Psoas muscle (tissue), 8 donors: ENCODE measurements at regions of chr16 and their contacts with region 1.

Region 1: DNA sequence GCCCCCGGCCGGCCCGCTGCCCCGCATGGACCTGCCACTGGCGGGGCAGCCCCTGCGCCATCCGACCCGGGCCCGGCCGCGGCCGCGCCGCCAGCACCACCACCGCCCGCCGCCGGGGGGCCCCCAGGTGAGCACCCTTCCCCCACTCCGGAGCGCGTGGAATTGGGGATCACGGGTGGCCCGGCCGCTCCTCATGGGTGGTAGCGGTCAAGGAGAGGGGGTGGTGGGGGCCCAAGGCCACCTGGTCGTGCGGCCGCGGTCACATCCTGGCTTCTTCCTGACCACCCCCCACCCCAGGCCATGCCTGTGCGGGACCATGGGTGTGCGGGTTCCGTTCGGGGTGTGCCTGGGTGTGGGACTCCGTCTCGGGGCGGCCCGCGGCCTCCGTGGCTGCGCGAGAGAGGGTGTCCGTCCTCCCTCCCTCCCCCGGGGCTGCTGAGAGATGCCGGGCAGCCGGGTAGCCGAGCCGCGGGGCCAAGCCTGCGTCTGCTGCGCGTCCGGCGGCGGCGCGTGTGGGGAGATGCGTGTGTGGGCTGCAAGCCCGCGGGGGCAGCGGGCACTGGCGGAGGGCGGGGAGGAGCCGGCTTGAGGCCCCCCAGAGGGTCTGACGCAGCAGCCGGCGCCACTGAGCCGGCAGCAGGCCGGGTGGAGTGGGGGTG is 6.8 kb downstream of the ACD start:
- DNase-seq: no peak
- ATAC-seq: peak in 2 of 4 donors; percentile 28 to 31
- H3K4me3 ChIP-seq: peak overlapping the region; percentile 56
- H3K27ac ChIP-seq: no peak overlapping the region
- H3K4me1 ChIP-seq: no peaks in the 10 kb centered on the region
- H3K27me3 ChIP-seq: peaks cover 0 to 60% (median 41%) of the 10 kb centered on the region in 3 donors
- CTCF ChIP-seq: peak; percentile 25

Region 2: DNA sequence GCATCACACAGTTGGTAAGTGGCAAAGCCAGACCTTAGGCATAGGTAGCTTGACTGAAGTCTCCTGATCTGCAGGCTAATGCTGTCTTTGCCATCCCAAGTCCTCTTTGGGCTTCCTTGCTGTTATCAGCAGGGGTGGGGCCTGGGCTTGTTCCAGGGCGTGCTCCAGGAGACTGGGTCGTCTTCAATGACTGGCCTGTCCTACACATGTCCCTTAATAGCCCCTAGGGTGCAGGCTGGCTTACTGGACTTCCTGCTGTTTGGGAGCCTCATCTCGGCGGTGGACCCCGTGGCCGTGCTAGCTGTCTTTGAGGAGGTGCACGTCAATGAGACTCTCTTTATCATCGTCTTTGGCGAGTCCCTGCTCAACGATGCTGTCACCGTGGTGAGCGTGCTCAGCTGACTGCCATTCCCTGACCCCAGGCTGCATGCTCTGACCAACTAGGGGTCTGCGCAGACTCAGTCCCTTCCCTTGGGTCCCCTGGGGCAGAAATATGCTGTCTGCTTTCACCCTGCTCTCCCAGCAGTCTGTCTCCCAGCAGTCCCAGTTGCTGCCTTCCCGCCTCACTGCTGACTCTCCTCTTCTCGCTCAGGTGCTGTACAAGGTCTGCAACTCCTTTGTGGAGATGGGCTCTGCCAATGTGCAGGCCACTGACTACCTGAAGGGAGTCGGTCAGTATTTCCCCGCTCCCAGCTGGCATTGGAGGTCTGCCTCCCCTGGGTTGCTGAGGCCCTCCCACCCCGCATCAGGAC is 398.3 kb before region 1 on chr16:
- intact Hi-C with region 1: loop called in 1 of 2 experiments (anchors 5 kb)
- DNase-seq: peak; percentile 12 to 39
- ATAC-seq: no peak
- H3K4me3 ChIP-seq: no peak overlapping the region
- H3K27ac ChIP-seq: no peak overlapping the region
- H3K4me1 ChIP-seq: no peaks in the 10 kb centered on the region
- H3K27me3 ChIP-seq: no peaks in the 10 kb centered on the region
- CTCF ChIP-seq: no peak

Region 3: GRCh38 chr16:67726106-67727034 is 73.1 kb after region 1 on chr16:
- intact Hi-C with region 1: no loop called
- DNase-seq: no peak
- ATAC-seq: peak in 2 of 4 donors; percentile 14 to 41
- H3K4me3 ChIP-seq: no peak overlapping the region
- H3K27ac ChIP-seq: no peak overlapping the region
- H3K4me1 ChIP-seq: no peaks in the 10 kb centered on the region
- H3K27me3 ChIP-seq: no peaks in the 10 kb centered on the region
- CTCF ChIP-seq: no peak